ENCODE measurements at regions of chr22 and their contacts with region 1.

Region 1: GRCh38 chr22:31036671-31037550 is 44.2 kb upstream of the SMTN start:
- DNase-seq: peak; percentile 34
- H3K4me3 ChIP-seq: no peak overlapping the region
- H3K27ac ChIP-seq: peak overlapping the region; percentile 75 to 88 (median 82)
- H3K4me1 ChIP-seq: peaks cover 5 to 26% (median 14%) of the 10 kb centered on the region in 4 donors
- H3K27me3 ChIP-seq: no peaks in the 10 kb centered on the region
- CTCF ChIP-seq: peak in 2 of 5 experiments; percentile 4 to 16
- EP300 ChIP-seq: peak; percentile 77
- POLR2A ChIP-seq: no peak

Region 2: DNA sequence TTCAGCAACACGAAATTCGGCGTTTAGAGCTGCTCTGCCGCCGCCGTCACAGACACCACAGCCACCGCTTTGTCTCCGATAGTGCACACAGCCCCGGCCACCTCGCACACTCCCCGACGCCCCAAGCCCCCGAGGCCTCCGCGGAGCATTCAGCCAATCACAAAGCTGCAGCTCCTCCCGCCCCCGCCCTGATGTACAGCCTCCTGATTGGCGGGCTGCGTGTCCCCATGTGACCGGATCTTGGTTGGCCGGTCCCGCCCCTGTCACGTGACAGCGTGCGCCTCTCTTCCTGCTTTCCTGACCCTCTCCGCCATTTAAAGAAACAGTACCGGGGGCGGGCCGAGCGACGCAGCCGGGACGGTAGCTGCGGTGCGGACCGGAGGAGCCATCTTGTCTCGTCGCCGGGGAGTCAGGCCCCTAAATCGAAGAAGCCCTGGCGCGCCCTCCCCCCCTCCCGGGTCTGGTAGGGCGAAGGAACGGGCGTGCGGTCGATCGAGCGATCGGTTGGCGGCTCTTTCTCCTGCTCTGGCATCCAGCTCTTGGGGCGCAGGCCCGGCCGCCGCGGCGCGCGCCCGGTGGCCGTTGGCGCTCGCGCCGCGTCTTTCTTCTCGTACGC is 67.9 kb before region 1 on chr22 and contains the start of gene TUG1:
- in situ Hi-C with region 1: no loop called
- intact Hi-C with region 1: loop called (anchors 5 kb)
- DNase-seq: peak; percentile 99
- H3K4me3 ChIP-seq: peak within 1 kb of the TSS; percentile 83 to 97 (median 89)
- H3K27ac ChIP-seq: peak within 1 kb of the TSS; percentile 94 to 99 (median 96)
- H3K4me1 ChIP-seq: peaks cover 0 to 47% (median 22%) of the 10 kb centered on the region in 4 donors
- H3K27me3 ChIP-seq: no peaks in the 10 kb centered on the region
- CTCF ChIP-seq: no peak
- EP300 ChIP-seq: no peak
- POLR2A ChIP-seq: peak; percentile 81
- total RNA-seq, gene TUG1: 77.7 to 294 (median 112) TPM

Region 3: GRCh38 chr22:31020334-31020733 is 16.6 kb before region 1 on chr22:
- in situ Hi-C with region 1: no loop called
- intact Hi-C with region 1: no loop called
- DNase-seq: no peak
- H3K4me3 ChIP-seq: no peak overlapping the region
- H3K27ac ChIP-seq: no peak overlapping the region
- H3K4me1 ChIP-seq: no peaks in the 10 kb centered on the region
- H3K27me3 ChIP-seq: no peaks in the 10 kb centered on the region
- CTCF ChIP-seq: no peak
- EP300 ChIP-seq: no peak
- POLR2A ChIP-seq: no peak

Region 4: GRCh38 chr22:31055635-31056159 is 18.8 kb after region 1 on chr22:
- in situ Hi-C with region 1: no loop called
- intact Hi-C with region 1: loop called (anchors 2 kb)
- DNase-seq: peak; percentile 82
- H3K4me3 ChIP-seq: no peak overlapping the region
- H3K27ac ChIP-seq: peak overlapping the region; percentile 82 to 89 (median 86)
- H3K4me1 ChIP-seq: peaks cover 0 to 21% (median 10%) of the 10 kb centered on the region in 4 donors
- H3K27me3 ChIP-seq: no peaks in the 10 kb centered on the region
- CTCF ChIP-seq: no peak
- EP300 ChIP-seq: peak; percentile 95
- POLR2A ChIP-seq: no peak

Region 5: DNA sequence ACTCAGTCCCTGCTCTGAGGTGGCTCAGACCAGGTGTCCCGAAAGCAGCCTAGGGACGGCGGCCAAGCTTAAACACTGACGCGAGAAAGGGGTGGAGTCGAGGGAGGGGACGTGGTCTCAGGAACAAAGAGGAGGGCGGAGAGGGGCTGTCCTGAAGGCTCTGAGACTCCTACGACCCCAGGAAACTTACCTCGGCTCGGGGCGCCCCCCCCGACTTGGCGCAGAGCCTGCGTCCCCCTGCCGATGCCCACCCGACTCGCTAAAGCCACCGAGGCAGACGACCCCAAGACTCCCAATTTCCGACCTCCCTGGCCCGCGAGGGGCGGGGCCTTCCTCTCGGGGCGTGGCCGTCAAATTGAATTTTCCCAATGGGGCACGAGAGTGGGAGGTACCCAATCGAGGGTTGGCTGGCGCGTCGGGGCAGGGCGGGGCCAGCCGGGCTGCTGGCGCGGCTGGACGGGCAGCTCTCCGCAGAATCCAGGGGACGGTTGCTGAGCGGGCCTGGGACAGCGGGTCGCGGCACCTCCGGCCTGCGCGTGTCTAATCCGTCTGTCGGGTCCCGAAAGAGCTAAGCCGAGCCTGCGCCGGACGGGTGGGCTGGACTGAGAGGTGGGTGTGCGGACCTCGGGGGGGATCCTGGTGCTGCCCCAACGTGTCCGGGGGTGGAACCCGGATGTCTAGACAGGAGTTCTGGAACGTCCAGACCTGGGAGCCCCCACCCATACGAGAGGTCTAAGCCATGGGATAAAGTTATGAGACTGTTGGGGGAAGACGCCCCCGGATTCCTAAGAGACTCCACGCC is 44.1 kb after region 1 on chr22 and contains the start of gene SMTN:
- in situ Hi-C with region 1: no loop called
- intact Hi-C with region 1: loop called (anchors 1 kb)
- DNase-seq: peak; percentile 97
- H3K4me3 ChIP-seq: peak within 1 kb of the TSS; percentile 57 to 71 (median 69)
- H3K27ac ChIP-seq: peak within 1 kb of the TSS; percentile 90 to 97 (median 96)
- H3K4me1 ChIP-seq: peaks cover 31 to 73% (median 58%) of the 10 kb centered on the region in 4 donors
- H3K27me3 ChIP-seq: no peaks in the 10 kb centered on the region
- CTCF ChIP-seq: no peak
- EP300 ChIP-seq: no peak
- POLR2A ChIP-seq: peak; percentile 98
- total RNA-seq, gene SMTN: 171 to 341 (median 219) TPM

Region 6: GRCh38 chr22:31272522-31273446 is 235.9 kb after region 1 on chr22:
- in situ Hi-C with region 1: no loop called
- intact Hi-C with region 1: no loop called
- DNase-seq: peak; percentile 56
- H3K4me3 ChIP-seq: no peak overlapping the region
- H3K27ac ChIP-seq: peak overlapping the region in 2 of 4 donors; percentile 6 to 18
- H3K4me1 ChIP-seq: peaks cover 0 to 4% (median 0%) of the 10 kb centered on the region in 4 donors
- H3K27me3 ChIP-seq: no peaks in the 10 kb centered on the region
- CTCF ChIP-seq: peak; percentile 57 to 69 (median 64)
- EP300 ChIP-seq: no peak
- POLR2A ChIP-seq: no peak